Activated CD4-positive, alpha-beta T cell treated with anti-CD3 and anti-CD28 coated beads, Interleukin-2, amount 10 ng/mL, durations not matched to agents 24 days and 14 days (primary cell): ENCODE measurements at regions of chr19 and their contacts with region 1.

Region 1: DNA sequence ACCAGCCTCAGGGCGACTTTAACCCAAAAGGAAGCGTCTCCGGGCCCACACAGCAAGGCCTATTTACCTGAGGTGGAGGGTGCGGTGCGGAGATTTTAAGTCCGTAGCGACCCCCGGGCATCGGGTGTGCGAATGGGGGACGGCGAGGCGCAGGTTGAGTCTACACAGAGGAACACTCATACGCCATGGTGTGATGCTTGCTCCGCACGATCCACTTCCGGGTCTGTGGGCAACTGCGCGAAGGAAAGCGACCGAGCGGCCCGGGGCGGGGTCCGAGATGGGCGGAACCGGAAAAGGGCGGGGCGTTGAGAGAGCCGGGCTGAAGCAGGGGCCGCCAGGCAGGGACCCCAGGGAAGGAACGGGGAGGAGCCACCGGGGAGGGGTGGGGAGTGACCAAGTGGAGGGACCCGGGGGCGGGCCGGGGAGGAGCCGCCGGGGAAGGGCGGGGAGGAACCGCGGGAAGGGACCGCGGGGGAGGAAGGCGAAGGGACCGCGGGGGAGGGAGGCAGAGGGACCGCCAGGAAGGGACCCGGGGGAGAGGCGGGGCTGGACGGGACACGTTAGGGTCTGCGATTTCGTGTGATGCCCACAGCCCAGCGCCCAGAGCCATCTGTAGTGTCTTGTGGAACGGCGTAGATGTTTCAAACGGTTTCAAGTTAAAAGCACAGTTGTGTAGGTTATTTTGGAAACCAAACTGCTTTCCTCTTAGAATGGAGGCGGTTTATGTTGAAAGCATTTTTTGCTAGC is at the start of gene ZNF160:
- DNase-seq: peak; percentile 100
- H3K4me3 Mint-ChIP-seq: peak within 1 kb of the TSS; percentile 93
- H3K27ac Mint-ChIP-seq: peak within 1 kb of the TSS; percentile 90
- H3K4me1 Mint-ChIP-seq: peaks cover 19% of the 10 kb centered on the region
- H3K27me3 Mint-ChIP-seq: no peaks in the 10 kb centered on the region
- total RNA-seq, gene ZNF160: 30.6 and 37.5 TPM in 2 replicates

Region 2: DNA sequence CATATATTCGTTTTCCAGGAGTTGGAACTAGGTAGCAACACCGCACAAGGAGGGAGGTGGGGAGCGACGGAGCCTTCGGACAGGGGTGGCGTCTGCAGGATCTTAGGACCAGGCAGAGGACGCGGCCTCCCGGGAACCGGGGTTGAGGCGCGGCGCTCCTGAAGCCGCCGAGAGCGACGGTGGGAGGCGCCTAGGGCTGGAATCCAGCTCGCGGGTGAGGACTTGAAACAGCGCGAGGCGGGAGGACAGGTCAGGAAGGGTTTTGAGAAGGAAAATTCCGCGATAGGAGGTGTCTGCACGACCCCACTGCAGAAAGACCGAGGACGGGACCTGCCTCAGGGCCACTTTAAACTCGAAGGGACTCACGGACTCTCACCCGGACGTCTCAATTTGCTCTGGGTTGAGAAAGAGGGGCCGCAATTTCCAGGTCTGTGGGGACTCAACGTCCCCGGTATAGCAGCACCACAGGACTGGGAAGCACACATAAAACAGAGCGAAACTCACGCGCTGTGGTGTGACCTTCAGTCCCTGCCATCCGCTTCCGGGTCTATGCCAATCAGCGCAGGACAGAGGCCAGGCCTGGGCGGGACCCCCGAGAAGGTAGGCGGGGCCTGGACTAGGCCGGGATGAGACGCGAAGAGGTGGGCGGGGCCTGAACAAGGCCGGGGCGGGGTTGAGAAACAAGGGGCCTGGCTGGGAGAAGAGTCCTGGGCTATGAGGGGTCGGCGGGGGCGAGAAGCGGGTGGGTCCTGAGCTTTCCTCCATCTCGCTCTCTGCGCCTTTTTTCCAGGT is 206.0 kb before region 1 on chr19 and contains the start of gene ZNF320:
- intact Hi-C with region 1: loop called (anchors 1 kb)
- DNase-seq: peak; percentile 98
- H3K4me3 Mint-ChIP-seq: peak within 1 kb of the TSS; percentile 92
- H3K27ac Mint-ChIP-seq: peak within 1 kb of the TSS; percentile 93
- H3K4me1 Mint-ChIP-seq: peaks cover 7% of the 10 kb centered on the region
- H3K27me3 Mint-ChIP-seq: no peaks in the 10 kb centered on the region
- total RNA-seq, gene ZNF320: 8.0 and 17.8 TPM in 2 replicates

Region 3: DNA sequence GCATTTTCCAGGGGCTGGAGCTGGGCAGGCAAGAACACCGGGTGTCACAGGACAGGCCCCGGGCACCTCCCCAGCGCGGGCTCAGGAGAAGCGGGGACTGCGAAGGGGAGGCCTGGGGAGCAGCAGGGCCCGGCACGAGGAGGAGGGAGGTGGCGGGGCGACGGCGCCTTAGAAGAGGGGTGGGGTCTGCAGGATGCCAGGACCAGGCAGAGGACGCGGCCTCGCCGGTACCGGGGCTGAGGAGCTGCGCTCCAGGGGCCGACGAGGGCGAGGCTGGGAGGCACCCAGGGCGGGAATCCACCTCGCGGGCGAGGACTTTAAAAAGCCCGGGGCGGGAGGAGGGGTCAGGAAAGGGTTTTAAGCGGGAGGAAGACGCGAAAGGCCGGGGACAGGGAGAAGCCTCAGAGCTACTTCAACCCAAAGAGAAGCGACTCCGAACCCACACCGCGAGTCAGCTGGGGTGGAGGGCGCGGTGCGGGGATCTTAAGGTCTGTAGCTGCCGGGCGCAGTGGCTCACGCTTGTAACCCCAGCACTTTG is 54.8 kb after region 1 on chr19:
- intact Hi-C with region 1: loop called (anchors 1 kb)
- DNase-seq: peak; percentile 75
- H3K4me3 Mint-ChIP-seq: peak overlapping the region; percentile 87
- H3K27ac Mint-ChIP-seq: peak overlapping the region; percentile 73
- H3K4me1 Mint-ChIP-seq: peaks cover 12% of the 10 kb centered on the region
- H3K27me3 Mint-ChIP-seq: no peaks in the 10 kb centered on the region

Region 4: DNA sequence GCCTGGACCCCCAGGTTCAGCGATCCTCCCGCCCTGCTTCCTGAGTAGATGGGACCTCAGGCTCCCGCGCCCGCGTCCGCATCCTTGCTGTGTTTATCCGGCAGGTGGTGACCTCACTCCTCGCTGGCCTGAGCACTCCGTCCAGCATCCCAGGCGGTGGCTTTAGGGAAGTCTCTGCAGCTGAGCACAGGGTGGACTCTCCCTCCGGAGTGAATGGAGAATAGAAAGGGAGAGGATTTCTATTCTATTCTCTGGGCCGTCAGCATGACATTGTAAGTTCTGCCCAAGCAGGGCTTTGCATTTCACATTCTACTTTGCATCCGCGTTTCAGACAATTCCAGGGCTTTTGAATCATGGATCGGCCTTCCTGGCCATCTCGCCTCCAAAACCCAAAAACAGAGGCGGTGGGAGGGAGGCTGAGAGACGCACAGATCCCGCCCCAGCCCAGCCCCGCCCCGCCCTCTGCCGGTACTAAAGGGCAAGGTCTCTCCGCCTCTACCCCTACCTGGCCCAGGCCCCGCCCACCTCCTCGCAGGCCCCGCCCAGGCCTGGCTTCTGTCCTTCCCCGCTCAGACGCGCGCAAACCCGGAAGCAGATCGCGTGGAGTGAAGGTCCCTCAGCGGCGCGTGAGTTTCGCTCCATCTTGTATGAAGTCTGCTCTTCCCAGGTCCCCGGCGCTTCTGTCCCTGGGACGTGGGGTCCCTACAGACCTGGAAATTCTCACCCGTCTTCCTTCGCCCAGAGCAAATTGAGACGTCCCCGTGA is 261.9 kb after region 1 on chr19 and contains the start of gene ZNF525:
- intact Hi-C with region 1: loop called (anchors 1 kb)
- DNase-seq: peak; percentile 99
- H3K4me3 Mint-ChIP-seq: peak within 1 kb of the TSS; percentile 95
- H3K27ac Mint-ChIP-seq: peak within 1 kb of the TSS; percentile 95
- H3K4me1 Mint-ChIP-seq: peaks cover 15% of the 10 kb centered on the region
- H3K27me3 Mint-ChIP-seq: no peaks in the 10 kb centered on the region
- total RNA-seq, gene ZNF525: 18.3 and 19.4 TPM in 2 replicates

Region 5: DNA sequence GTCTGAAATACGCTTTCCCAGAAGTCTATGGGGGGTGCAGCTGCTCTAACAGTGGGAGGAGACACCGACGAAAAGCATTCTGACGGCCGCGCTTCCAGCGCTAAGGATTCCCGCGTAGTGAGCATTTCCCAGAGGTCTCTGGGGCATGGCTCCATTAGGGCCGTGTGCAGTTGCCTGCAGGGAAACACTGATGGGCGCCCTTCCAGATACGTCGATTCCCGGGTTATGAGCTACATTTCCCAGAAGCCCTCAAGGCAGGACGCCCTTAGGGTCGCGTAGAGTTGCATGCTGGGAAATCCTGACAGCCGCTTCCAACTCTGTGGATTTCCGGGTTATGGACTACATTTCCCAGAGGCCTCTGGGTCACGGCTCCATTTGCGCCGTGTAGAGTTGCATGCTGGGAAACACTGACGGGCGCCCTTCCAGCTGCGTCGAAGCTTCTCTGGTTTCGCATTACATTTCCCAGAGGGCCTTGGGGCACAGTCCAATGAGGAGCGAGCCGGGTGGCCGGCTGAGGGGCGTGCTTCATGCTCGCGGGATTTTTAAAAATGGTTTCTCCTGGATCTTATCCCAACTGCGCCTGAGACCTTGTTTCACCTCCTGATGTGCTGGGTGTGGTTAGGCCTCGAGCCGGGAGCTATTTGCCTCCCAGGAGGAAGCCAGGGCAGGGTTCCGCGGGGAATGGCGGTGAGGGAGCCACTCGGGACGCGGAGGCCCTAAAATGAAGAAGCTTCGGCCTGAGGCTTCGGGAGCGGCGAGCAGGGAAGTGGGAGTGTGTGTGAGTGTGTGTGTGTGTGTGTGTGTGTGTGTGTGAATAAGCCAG is 417.4 kb after region 1 on chr19:
- intact Hi-C with region 1: loop called (anchors 5 kb)
- DNase-seq: peak; percentile 95
- H3K4me3 Mint-ChIP-seq: peak overlapping the region; percentile 100
- H3K27ac Mint-ChIP-seq: peak overlapping the region; percentile 94
- H3K4me1 Mint-ChIP-seq: peaks cover 14% of the 10 kb centered on the region
- H3K27me3 Mint-ChIP-seq: no peaks in the 10 kb centered on the region